A673 (cell line): ENCODE measurements at regions of chr9 and their contacts with region 1.

Region 1: DNA sequence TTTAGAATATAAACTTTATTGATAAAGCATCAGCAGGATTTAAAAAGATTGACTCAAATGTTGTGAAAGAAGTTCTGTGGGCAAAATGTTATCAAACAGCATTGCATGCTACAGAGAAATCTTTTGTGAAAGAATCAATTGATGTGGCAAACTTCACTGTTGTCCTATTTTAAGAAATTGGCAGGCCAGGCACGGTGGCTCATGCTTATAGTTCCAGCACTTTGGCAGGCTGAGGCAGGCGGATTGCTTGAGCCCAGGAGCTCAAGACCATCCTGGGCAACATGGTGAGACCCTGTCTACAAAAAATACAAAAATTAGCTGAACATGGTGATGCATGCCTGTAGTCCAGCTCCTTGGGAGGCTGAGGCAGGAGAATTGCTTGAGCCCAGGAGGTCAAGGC is 17.4 kb downstream of the ZBTB43 start:
- DNase-seq: no peak
- H3K4me3 ChIP-seq: no peak overlapping the region
- H3K27ac ChIP-seq: no peak overlapping the region
- H3K4me1 ChIP-seq: no peaks in the 10 kb centered on the region
- H3K27me3 ChIP-seq: no peaks in the 10 kb centered on the region
- CTCF ChIP-seq: no peak

Region 2: GRCh38 chr9:127076860-127077657 is 254.8 kb after region 1 on chr9:
- CTCF ChIA-PET with region 1: no interaction called
- POLR2A ChIA-PET with region 1: interaction called, 25 read pairs
- intact Hi-C with region 1: no loop called
- DNase-seq: no peak
- H3K4me3 ChIP-seq: no peak overlapping the region
- H3K27ac ChIP-seq: no peak overlapping the region
- H3K4me1 ChIP-seq: no peaks in the 10 kb centered on the region
- H3K27me3 ChIP-seq: no peaks in the 10 kb centered on the region
- CTCF ChIP-seq: no peak

Region 3: DNA sequence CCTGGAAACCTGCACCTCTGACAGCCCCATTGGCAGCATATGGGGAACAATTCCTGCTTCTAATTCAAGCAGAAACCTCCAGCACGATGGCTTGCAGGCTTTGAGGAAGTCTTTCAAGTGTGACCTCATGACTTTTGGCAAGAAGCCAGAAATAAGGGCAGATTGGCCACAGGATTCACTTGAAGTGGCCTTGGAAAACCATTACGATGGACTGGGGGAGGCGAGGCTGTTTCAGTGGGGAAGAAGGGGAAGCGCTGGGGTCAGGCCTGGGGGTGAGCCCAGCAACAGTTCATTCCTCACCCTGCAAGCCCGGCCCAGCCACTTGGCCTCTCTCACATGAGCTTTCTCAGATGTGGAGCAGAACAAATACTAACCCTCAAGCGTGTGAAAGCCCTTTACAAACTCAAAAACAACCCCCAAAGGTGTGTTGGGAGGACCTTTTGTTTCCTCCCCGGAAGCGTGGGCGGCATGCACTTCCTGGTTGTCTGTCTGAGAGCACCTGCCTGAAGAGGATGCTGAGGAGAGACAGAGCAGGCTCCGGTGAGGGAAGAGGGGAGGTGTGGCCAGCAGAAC is 1185.4 kb after region 1 on chr9:
- CTCF ChIA-PET with region 1: no interaction called
- POLR2A ChIA-PET with region 1: no interaction called
- intact Hi-C with region 1: no loop called
- DNase-seq: peak; percentile 23
- H3K4me3 ChIP-seq: no peak overlapping the region
- H3K27ac ChIP-seq: no peak overlapping the region
- H3K4me1 ChIP-seq: no peaks in the 10 kb centered on the region
- H3K27me3 ChIP-seq: no peaks in the 10 kb centered on the region
- CTCF ChIP-seq: no peak